ENCODE measurements at regions of chr1 and their contacts with region 1.

Region 1: GRCh38 chr1:214386747-214387146 is 105.8 kb downstream of the SMYD2 start:
- DNase-seq: no peak
- ATAC-seq: no peak
- H3K4me3 ChIP-seq: no peak overlapping the region
- H3K27ac ChIP-seq: no peak overlapping the region
- H3K4me1 ChIP-seq: no peaks in the 10 kb centered on the region
- H3K27me3 ChIP-seq: no peaks in the 10 kb centered on the region
- CTCF ChIP-seq: no peak
- POLR2A ChIP-seq: no peak

Region 2: GRCh38 chr1:214292322-214292721 is 94.4 kb before region 1 on chr1:
- intact Hi-C with region 1: no loop called
- DNase-seq: no peak
- ATAC-seq: no peak
- H3K4me3 ChIP-seq: no peak overlapping the region
- H3K27ac ChIP-seq: no peak overlapping the region
- H3K4me1 ChIP-seq: peaks cover 0 to 72% (median 40%) of the 10 kb centered on the region in 12 donors
- H3K27me3 ChIP-seq: no peaks in the 10 kb centered on the region
- CTCF ChIP-seq: no peak
- POLR2A ChIP-seq: no peak

Region 3: DNA sequence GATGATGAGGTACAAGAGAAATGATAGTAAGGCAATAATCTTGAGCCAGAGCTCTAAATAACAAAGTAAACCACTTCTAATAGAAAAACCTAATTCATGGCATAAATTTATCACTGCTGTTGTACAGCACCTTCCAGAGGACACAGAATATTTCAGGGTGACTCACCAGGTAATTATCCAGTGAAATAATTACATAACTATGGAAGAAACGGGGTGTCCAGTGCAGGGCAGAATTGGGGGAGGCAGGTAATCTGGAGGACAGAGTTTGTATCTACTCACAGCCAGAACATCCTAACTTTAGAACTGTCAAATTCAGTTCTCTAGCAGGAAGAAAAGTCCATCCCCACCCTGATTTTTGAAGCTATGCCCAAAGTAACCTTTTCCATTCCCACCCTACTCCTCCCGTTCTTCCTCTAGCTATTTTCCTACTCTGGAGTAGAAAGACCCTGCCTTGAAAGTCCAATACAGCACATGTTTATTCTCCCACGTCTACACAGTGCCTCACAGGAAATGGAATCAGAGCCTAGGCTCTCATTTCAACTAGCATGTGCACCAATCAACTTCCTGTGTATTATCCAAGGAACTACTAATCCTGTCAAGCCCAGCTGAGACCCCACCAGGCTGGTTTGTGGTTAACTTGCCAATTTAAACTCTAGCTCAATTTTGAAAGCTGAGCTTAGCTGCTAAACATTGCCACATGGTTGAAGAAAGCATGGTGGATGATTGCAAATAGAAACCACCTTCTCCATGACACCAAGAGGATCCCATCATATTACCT is 68.1 kb after region 1 on chr1:
- intact Hi-C with region 1: loop called in 1 of 10 experiments (anchors 2 kb)
- DNase-seq: no peak
- ATAC-seq: peak in 3 of 4 donors; percentile 61 to 74 (median 62)
- H3K4me3 ChIP-seq: no peak overlapping the region
- H3K27ac ChIP-seq: peak overlapping the region in 2 of 12 donors; percentile 6 to 20
- H3K4me1 ChIP-seq: peaks cover 0 to 53% (median 25%) of the 10 kb centered on the region in 12 donors
- H3K27me3 ChIP-seq: no peaks in the 10 kb centered on the region
- CTCF ChIP-seq: no peak
- POLR2A ChIP-seq: no peak

Measured in heart left ventricle (tissue), 16 donors.